PC-3 (cell line): ENCODE measurements at regions of chr15 and their contacts with region 1.

Region 1: DNA sequence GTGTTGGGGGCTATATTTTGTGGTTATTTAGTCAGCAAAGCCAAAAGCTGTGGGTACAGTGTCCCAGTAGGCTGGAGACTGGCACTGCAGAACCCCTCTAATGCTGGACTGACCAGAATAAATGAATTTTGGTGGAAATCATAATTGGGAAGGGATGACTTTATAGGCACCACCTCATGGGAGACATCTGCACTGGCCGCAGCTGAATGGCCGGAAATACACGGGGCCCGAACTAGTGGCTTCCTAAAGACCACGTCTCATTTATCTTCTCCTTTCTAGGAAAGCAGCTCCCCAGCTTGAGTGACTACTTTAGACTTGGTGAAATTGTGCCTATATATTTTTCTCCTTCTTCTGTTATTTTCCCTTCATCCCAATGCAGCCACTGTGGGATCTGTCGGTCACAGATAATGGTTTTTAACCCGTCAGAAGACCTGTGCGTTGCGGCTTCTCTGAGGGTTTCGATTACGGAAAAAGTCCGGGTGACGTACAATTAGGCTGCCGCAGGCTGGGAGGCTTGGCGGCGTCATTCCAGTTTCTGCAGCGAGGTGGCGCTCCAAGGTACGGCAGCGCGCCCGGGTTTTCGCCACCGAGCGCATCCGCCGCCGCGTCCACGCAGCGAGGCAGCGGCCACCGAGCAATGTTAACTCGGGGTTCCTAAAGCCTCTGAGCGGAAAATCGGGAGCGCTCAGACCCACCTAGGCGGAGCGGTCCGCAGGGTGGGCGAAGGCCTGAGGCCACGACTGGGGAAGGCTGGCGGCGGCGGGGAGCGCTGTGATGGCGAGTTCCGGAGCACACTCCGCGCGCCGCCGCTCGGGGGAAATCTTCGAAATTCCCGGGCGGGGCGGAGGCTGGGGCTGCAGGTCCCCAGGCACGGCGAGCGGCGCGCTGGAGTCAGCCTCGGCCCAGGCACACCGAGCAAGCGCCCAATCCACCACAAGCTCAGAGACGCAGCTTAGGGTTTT is 26.3 kb downstream of the NR2F2 start:
- DNase-seq: peak; percentile 87
- ATAC-seq: peak; percentile 81
- H3K4me3 ChIP-seq: peak overlapping the region; percentile 88
- H3K27ac ChIP-seq: no peak overlapping the region
- H3K4me1 ChIP-seq: peaks cover 6% of the 10 kb centered on the region
- H3K27me3 ChIP-seq: no peaks in the 10 kb centered on the region
- CTCF ChIP-seq: peak; percentile 89

Region 2: GRCh38 chr15:96225320-96226259 is 131.2 kb before region 1 on chr15:
- CTCF ChIA-PET with region 1: no interaction called
- POLR2A ChIA-PET with region 1: no interaction called
- intact Hi-C with region 1: no loop called
- DNase-seq: no peak
- ATAC-seq: no peak
- H3K4me3 ChIP-seq: no peak overlapping the region
- H3K27ac ChIP-seq: no peak overlapping the region
- H3K4me1 ChIP-seq: peaks cover 8% of the 10 kb centered on the region
- H3K27me3 ChIP-seq: no peaks in the 10 kb centered on the region
- CTCF ChIP-seq: no peak

Region 3: DNA sequence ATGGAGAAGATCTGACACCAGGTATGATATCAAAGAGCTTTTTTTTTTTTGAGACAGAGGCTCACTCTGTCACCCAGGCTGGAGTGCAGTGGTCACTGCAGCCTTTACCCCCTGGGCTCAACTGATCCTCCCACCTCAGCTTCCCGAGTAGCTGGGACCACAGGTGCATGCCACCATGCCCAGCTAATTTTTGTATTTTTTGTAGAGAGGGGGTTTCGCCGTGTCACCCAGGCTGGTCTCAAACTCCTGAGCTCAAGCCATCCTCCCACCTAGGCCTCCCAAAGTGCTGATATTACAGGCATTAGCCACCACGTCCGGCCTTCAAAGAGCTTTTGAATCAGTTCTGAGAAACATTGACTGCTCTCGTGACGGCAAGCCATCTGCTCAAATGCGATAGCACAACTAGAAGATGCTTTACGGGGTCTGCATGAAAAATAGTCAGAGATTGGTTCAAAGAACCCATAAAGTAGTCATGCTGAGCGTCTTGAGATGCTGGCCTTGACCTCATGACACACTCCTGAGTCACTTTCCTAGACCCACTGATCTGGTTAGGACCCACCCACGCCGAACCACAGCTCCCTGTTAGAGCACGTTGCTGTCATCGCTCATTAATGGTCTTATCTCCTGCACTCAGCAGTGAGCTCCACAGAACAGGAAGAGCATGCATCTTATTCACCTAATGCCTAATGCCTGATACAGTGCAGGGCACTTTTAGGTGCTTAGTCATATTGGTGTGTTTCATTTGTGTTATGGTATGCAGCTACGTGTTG is 83.3 kb before region 1 on chr15:
- CTCF ChIA-PET with region 1: no interaction called
- POLR2A ChIA-PET with region 1: no interaction called
- intact Hi-C with region 1: no loop called
- DNase-seq: peak; percentile 98
- ATAC-seq: peak; percentile 91
- H3K4me3 ChIP-seq: peak overlapping the region; percentile 49; the same call in 1 of the 2 replicates
- H3K27ac ChIP-seq: peak overlapping the region; percentile 88
- H3K4me1 ChIP-seq: peaks cover 76% of the 10 kb centered on the region
- H3K27me3 ChIP-seq: no peaks in the 10 kb centered on the region
- CTCF ChIP-seq: no peak

Region 4: DNA sequence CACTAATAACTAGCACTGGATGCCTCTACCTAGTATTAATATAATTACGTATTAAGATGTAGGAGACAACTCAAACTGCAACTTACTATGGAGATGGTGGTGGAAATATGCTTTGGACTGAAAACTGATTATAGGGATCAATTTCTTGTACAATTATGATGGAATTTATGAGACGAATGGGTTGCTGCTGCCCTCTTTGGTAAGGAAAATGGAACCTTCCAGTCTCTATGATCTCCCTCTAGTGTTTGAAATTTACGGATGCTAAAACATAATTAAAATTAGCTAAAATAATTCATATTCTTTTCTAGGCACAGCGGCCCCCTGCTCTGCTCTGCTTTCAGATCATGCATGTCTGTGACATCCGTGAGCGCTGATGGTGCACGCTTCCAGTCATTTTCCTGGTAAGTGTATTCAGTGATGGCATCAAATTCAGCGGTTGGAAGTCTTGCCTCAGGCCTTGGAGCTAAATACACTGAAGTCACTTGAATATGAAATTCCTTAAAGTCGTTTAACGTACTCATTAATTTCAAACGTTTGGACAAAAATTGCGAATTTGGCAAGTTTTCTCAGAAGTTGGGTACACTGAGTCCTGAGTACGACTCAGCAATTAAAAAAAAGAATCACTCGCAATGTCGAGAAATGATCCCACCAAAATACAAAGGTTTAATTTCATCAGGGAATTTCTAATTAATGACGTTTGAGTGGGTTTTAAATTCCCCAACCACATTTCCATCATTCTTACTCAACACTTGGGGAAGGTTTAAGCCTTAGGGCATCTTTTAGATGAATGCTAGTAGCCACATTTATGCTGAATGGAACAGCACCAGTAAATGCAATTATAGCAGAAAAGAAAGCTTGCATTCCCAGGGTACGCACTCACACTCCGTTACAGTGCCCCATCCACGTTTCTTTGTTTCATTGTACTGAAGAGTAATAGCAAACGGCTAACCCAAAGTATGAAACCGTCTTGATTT is 106.3 kb after region 1 on chr15:
- CTCF ChIA-PET with region 1: interaction called, 3 read pairs
- POLR2A ChIA-PET with region 1: no interaction called
- intact Hi-C with region 1: loop called (anchors 2 kb)
- DNase-seq: peak; percentile 21
- ATAC-seq: no peak
- H3K4me3 ChIP-seq: no peak overlapping the region
- H3K27ac ChIP-seq: no peak overlapping the region
- H3K4me1 ChIP-seq: no peaks in the 10 kb centered on the region
- H3K27me3 ChIP-seq: peaks cover 84% of the 10 kb centered on the region
- CTCF ChIP-seq: peak; percentile 54

Region 5: GRCh38 chr15:97234851-97235610 is 878.3 kb after region 1 on chr15:
- CTCF ChIA-PET with region 1: no interaction called
- POLR2A ChIA-PET with region 1: no interaction called
- intact Hi-C with region 1: loop called (anchors 10 kb)
- DNase-seq: peak; percentile 70
- ATAC-seq: peak; percentile 63
- H3K4me3 ChIP-seq: peak overlapping the region; percentile 11; the same call in 1 of the 2 replicates
- H3K27ac ChIP-seq: no peak overlapping the region
- H3K4me1 ChIP-seq: no peaks in the 10 kb centered on the region
- H3K27me3 ChIP-seq: peaks cover 55% of the 10 kb centered on the region
- CTCF ChIP-seq: peak; percentile 92